ENCODE measurements at regions of chr5 and their contacts with region 1.

Region 1: GRCh38 chr5:76908166-76908565 is 44.7 kb upstream of the CRHBP start:
- H3K4me3 Mint-ChIP-seq: no peak overlapping the region
- H3K27ac Mint-ChIP-seq: no peak overlapping the region
- H3K4me1 Mint-ChIP-seq: peaks cover 7% of the 10 kb centered on the region
- H3K27me3 Mint-ChIP-seq: no peaks in the 10 kb centered on the region

Region 2: GRCh38 chr5:77015938-77016569 is 107.9 kb after region 1 on chr5:
- intact Hi-C with region 1: loop called (anchors 5 kb)
- H3K4me3 Mint-ChIP-seq: no peak overlapping the region
- H3K27ac Mint-ChIP-seq: no peak overlapping the region
- H3K4me1 Mint-ChIP-seq: peaks cover 7% of the 10 kb centered on the region
- H3K27me3 Mint-ChIP-seq: peaks cover 2% of the 10 kb centered on the region

Measured in dendritic cell treated with granulocyte-macrophage colony-stimulating factor and Interleukin-4, amounts not matched to agents 40 ng/mL and 50 ng/mL, for 4 days (primary cell).